ENCODE measurements at regions of chr1 and their contacts with region 1.

Region 1: DNA sequence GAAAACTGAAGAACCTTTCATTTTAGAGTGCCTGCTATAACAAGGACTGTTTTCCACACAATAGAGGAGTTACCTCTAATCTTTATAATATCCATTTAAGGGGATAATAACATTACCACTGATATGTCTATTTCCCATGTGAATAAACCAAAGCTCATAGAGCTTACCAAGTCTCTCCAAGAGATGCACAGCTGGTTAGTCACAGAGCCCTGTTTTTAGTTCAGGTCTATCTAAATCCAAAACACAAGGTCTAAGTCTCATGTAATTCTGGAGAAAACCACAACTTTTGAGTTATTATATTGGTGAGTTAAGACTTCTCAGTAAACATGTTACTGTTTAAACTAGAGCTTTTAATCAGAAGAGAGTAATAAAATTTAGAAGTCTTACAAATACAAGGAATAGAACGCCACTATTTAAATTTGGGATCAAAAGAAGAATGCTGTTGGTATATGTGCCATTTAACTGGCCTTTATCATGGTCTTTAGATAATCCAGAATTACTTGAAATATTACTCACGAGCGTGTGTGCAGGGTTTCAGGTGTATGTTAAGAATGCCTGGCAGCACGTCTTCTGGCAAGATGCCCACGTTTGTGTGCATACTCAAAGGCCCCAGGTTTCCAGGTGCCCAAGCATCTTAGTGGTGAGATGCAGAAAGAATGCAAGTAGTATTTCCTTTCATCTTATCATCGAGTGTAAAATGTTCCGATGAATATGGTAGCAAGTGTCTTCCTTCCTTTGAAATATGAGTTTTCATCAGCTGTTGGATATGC is 190.6 kb downstream of the FMN2 start:
- DNase-seq: peak; percentile 45
- ATAC-seq: no peak
- H3K4me3 ChIP-seq: no peak overlapping the region
- H3K27ac ChIP-seq: no peak overlapping the region
- H3K4me1 ChIP-seq: peaks cover 6% of the 10 kb centered on the region
- H3K27me3 ChIP-seq: no peaks in the 10 kb centered on the region
- CTCF ChIP-seq: no peak
- POLR2A ChIP-seq: no peak
- RAD21 ChIP-seq: no peak

Region 2: DNA sequence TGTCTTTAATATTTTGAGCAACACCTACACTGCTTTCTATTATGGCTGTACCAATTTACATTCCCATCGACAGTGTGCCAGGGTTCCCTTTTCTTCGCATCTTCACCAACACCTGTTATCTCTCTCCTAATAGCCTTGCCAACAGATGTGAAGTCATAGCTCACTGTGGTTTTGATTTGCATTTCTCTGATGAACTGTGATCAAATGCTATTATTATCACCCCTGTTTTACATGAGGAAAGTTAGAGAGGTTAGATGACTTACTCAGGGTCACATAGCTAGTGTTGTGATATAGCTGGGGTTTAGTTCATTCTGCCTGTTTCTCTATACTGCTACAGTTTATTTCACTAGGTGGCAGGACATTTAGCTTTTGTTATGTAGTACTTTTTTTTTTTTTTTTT is 13.6 kb after region 1 on chr1:
- CTCF ChIA-PET with region 1: no interaction called
- POLR2A ChIA-PET with region 1: interaction called, 11 read pairs
- dilution Hi-C with region 1: no loop called
- in situ Hi-C with region 1: no loop called
- intact Hi-C with region 1: no loop called
- DNase-seq: peak; percentile 64
- ATAC-seq: no peak; the same call in 1 of the 2 replicates
- H3K4me3 ChIP-seq: no peak overlapping the region
- H3K27ac ChIP-seq: no peak overlapping the region
- H3K4me1 ChIP-seq: peaks cover 7% of the 10 kb centered on the region
- H3K27me3 ChIP-seq: no peaks in the 10 kb centered on the region
- CTCF ChIP-seq: 0 out of 2 replicates have a peak, but pooled peaks have one; percentile 6
- POLR2A ChIP-seq: no peak
- RAD21 ChIP-seq: no peak

Region 3: DNA sequence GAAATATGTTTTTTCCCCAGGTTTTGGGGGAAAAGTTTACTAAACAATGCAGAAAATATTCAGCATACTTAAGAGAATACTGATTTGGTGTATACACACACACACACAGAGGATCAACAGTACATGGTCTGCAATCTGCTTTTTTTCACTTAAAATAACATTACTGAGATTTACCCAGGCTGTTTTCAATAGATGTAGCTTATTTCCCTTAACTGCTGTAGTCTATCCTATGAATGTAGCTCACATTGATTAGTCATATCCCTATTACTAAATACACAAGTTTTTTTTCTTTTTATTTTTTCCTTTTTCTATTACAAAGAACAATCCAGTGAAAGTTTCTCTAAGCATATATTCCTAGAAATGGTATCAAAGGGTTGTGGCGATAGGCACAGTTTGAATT is 596.4 kb after region 1 on chr1:
- CTCF ChIA-PET with region 1: no interaction called
- POLR2A ChIA-PET with region 1: no interaction called
- dilution Hi-C with region 1: no loop called
- in situ Hi-C with region 1: no loop called
- intact Hi-C with region 1: no loop called
- DNase-seq: no peak
- ATAC-seq: no peak
- H3K4me3 ChIP-seq: no peak overlapping the region
- H3K27ac ChIP-seq: no peak overlapping the region
- H3K4me1 ChIP-seq: no peaks in the 10 kb centered on the region
- H3K27me3 ChIP-seq: no peaks in the 10 kb centered on the region
- CTCF ChIP-seq: no peak
- POLR2A ChIP-seq: no peak
- RAD21 ChIP-seq: no peak

Measured in IMR-90 (cell line).